ENCODE measurements at regions of chr7 and their contacts with region 1.

Region 1: GRCh38 chr7:108648989-108649388 is 79.3 kb downstream of the DNAJB9 start:
- DNase-seq: no peak
- H3K4me3 ChIP-seq: no peak overlapping the region
- H3K27ac ChIP-seq: no peak overlapping the region
- H3K4me1 ChIP-seq: no peaks in the 10 kb centered on the region; a peak in 3 of 4 replicates
- H3K27me3 ChIP-seq: no peaks in the 10 kb centered on the region
- CTCF ChIP-seq: no peak
- EP300 ChIP-seq: no peak
- RAD21 ChIP-seq: no peak

Region 2: DNA sequence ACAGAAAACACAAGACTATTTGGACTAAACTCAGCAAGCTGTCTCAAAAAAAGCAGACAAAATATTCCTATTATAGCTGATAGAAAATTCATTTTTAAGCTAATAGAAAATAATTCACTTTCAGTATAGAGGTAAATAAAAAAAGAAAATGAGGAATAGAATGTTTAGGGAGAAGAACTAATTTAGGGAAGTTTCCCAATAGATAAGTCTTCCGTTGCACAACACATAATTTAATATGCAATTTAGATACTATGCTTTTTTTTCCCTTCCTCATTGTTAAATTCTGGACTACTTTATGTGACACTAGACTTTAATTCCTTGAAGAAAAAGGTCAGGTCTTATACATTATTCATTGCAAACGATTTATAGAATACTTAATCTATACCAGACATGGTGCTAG is 133.4 kb before region 1 on chr7:
- CTCF ChIA-PET with region 1: no interaction called
- POLR2A ChIA-PET with region 1: no interaction called
- DNase-seq: no peak
- H3K4me3 ChIP-seq: no peak overlapping the region
- H3K27ac ChIP-seq: no peak overlapping the region
- H3K4me1 ChIP-seq: no peaks in the 10 kb centered on the region
- H3K27me3 ChIP-seq: no peaks in the 10 kb centered on the region
- CTCF ChIP-seq: no peak
- EP300 ChIP-seq: no peak
- RAD21 ChIP-seq: no peak

Region 3: GRCh38 chr7:108660460-108660859 is 11.5 kb after region 1 on chr7:
- CTCF ChIA-PET with region 1: interaction called, 19 read pairs
- POLR2A ChIA-PET with region 1: no interaction called
- DNase-seq: peak; percentile 79
- H3K4me3 ChIP-seq: no peak overlapping the region; a peak in 1 of 4 replicates
- H3K27ac ChIP-seq: no peak overlapping the region
- H3K4me1 ChIP-seq: no peaks in the 10 kb centered on the region
- H3K27me3 ChIP-seq: no peaks in the 10 kb centered on the region
- CTCF ChIP-seq: peak; percentile 63
- EP300 ChIP-seq: no peak
- RAD21 ChIP-seq: peak; percentile 79